ENCODE measurements at regions of chr6 and their contacts with region 1.

Region 1: GRCh38 chr6:42390228-42390934 is 61.3 kb downstream of the TRERF1 start:
- DNase-seq: peak; percentile 71
- H3K4me3 Mint-ChIP-seq: peak overlapping the region; percentile 58
- H3K27ac Mint-ChIP-seq: peak overlapping the region; percentile 99
- H3K4me1 Mint-ChIP-seq: peaks cover 89% of the 10 kb centered on the region
- H3K27me3 Mint-ChIP-seq: no peaks in the 10 kb centered on the region

Region 2: DNA sequence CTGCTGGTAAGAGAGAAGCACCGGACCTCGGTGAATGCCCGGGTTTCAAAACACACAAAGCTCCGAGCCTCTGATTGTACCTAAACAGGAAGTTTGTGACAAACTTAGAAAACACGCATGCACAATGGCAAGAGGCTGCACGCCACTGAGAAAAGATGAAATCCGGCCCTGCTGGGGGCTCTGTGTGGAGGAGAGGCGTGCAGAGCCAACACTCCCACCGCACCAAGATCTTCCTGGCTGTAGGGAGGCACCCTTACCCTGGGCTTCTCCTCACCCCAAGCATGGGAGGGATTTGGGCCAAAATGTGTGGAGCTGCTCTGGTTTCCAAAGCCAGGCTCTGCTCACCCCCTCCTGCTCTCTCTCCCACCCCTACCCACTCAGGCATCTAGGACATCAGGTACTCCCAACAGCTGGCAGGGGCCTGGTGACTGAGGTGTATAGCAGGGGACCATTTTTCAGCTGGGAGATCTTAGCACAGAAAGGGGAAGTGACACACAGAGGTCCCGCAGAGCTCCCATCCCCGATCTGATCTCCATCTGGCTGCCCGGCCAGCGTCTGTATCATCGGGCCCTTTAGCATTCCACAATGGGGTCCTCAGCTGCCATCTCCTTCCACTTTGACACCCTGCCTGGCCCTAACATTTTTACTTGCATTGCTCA is 22.9 kb before region 1 on chr6:
- CTCF ChIA-PET with region 1: interaction called, 12 read pairs
- DNase-seq: peak; percentile 52
- H3K4me3 Mint-ChIP-seq: peak overlapping the region; percentile 53
- H3K27ac Mint-ChIP-seq: peak overlapping the region; percentile 96
- H3K4me1 Mint-ChIP-seq: peaks cover 64% of the 10 kb centered on the region
- H3K27me3 Mint-ChIP-seq: no peaks in the 10 kb centered on the region

Region 3: GRCh38 chr6:42378125-42378524 is 12.3 kb before region 1 on chr6:
- CTCF ChIA-PET with region 1: interaction called, 15 read pairs
- DNase-seq: peak; percentile 58
- H3K4me3 Mint-ChIP-seq: peak overlapping the region; percentile 55
- H3K27ac Mint-ChIP-seq: peak overlapping the region; percentile 86
- H3K4me1 Mint-ChIP-seq: peaks cover 62% of the 10 kb centered on the region
- H3K27me3 Mint-ChIP-seq: no peaks in the 10 kb centered on the region

Region 4: GRCh38 chr6:42402184-42402583 is 11.8 kb after region 1 on chr6:
- CTCF ChIA-PET with region 1: interaction called, 17 read pairs
- DNase-seq: peak; percentile 33
- H3K4me3 Mint-ChIP-seq: no peak overlapping the region
- H3K27ac Mint-ChIP-seq: peak overlapping the region; percentile 39
- H3K4me1 Mint-ChIP-seq: peaks cover 49% of the 10 kb centered on the region
- H3K27me3 Mint-ChIP-seq: no peaks in the 10 kb centered on the region

Region 5: DNA sequence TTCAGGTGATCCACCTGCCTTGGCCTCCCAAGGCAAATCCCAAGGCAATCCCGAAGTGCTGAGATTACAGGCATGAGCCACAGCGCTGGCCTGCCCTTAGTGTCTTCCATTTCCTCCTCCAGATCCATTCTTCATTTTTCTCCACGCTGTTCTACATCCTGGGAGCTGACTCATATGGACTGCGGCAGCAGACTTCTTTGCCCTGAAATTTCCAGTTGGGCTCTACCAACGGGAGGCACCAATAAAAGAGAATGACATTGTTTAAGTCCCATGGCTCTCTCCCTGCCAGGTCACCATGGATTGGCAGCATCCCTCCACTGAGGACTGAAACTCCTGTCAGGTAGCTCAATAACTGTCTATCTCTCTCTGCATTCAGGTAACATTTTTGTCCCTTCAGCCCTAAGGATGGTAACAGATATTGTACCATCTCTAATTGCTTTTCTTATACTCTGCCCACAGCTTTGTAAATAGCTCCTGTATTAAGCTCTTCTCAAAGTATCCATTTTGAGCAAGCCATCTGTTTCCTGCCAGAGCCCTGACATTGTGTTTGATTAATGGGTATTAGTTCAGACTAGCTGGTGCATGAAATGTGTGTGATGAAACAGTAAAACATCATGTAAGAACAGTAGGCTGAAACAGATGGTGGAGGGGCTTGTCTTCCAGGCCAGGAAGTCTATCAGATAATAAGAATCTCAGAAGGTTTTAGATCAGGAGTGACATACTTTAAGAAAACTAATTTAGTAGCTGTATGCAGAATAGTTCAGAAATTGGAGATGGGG is 351.9 kb after region 1 on chr6:
- CTCF ChIA-PET with region 1: no interaction called
- DNase-seq: no peak
- H3K4me3 Mint-ChIP-seq: no peak overlapping the region
- H3K27ac Mint-ChIP-seq: no peak overlapping the region
- H3K4me1 Mint-ChIP-seq: peaks cover 19% of the 10 kb centered on the region
- H3K27me3 Mint-ChIP-seq: peaks cover 28% of the 10 kb centered on the region